ENCODE measurements at regions of chr2 and their contacts with region 1.

Region 1: DNA sequence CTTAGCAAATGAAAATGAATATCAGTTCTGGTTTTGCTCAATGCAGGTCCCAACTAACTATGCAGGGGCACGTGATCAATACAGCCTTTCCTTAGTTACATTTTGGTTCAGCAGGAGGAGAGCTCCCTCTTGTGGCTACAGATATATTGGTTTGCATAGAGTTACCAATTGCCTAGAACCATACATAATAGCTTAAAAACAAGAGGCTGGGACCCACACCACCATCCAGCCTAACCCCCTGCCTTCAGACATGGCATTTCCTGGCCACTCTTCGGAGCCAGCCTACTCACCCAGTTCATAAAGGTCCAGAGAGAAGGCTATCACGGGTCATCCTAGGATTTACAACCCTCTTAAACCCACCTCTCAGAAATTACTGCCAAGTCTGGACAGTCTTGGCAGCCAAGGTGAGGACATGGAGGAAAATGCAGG is 10.5 kb downstream of the CCDC93 start:
- DNase-seq: peak; percentile 48
- H3K27ac ChIP-seq: no peak overlapping the region
- CTCF ChIP-seq: peak; percentile 81

Region 2: DNA sequence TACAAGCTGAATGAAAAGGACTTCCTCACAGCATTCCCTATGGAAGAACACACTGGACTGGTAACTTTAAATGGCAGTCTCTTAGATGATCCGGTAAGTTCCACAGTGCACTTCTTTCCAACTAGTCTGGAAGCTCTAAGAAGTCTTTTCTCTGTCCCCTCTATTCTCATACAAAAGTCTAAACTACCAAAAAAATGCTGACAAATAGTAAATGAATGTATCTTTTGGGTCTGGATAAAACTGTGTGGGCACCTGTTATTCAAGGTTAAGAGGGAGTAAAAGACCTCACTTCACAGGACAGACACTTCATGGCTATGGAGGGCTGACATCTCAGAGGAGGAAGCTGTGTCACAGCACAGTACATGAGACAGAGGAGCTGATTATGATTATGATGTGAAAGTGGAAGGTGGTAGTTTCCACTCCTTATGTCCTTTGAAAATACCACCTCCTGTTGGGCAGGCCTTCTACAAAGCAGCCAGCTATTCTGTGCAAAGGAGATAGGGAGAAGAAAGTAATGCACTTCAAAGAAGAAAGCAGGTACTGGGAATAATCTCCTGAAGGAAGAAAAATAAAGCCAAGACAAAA is 13.5 kb before region 1 on chr2:
- CTCF ChIA-PET with region 1: interaction called, 16 read pairs
- POLR2A ChIA-PET with region 1: no interaction called
- DNase-seq: no peak
- H3K27ac ChIP-seq: no peak overlapping the region
- CTCF ChIP-seq: no peak

Measured in RWPE1 (cell line).